SK-N-SH (cell line): ENCODE measurements at regions of chr16 and their contacts with region 1.

Region 1: GRCh38 chr16:57519796-57520360 is 16.5 kb downstream of the CCDC102A start:
- DNase-seq: peak; percentile 94
- H3K4me3 ChIP-seq: no peak overlapping the region
- H3K27ac ChIP-seq: 0 out of 4 replicates have a peak overlapping the region, but pooled peaks of 1 of the 2 experiments have one; percentile 16
- H3K4me1 ChIP-seq: peaks cover 0 to 16% of the 10 kb centered on the region in 2 experiments; a peak in 1 of 4 replicates
- H3K27me3 ChIP-seq: no peaks in the 10 kb centered on the region
- CTCF ChIP-seq: peak; percentile 98
- EP300 ChIP-seq: no peak
- RAD21 ChIP-seq: peak; percentile 96

Region 2: GRCh38 chr16:57422026-57422944 is 97.6 kb before region 1 on chr16:
- CTCF ChIA-PET with region 1: interaction called, 426 read pairs
- POLR2A ChIA-PET with region 1: interaction called, 8 read pairs
- DNase-seq: peak; percentile 72
- H3K4me3 ChIP-seq: no peak overlapping the region
- H3K27ac ChIP-seq: peak overlapping the region; percentile 17 to 45; a peak in 3 of 4 replicates
- H3K4me1 ChIP-seq: peaks cover 0 to 17% of the 10 kb centered on the region in 2 experiments; a peak in 2 of 4 replicates
- H3K27me3 ChIP-seq: no peaks in the 10 kb centered on the region
- CTCF ChIP-seq: peak; percentile 77
- EP300 ChIP-seq: no peak
- RAD21 ChIP-seq: peak; percentile 86

Region 3: DNA sequence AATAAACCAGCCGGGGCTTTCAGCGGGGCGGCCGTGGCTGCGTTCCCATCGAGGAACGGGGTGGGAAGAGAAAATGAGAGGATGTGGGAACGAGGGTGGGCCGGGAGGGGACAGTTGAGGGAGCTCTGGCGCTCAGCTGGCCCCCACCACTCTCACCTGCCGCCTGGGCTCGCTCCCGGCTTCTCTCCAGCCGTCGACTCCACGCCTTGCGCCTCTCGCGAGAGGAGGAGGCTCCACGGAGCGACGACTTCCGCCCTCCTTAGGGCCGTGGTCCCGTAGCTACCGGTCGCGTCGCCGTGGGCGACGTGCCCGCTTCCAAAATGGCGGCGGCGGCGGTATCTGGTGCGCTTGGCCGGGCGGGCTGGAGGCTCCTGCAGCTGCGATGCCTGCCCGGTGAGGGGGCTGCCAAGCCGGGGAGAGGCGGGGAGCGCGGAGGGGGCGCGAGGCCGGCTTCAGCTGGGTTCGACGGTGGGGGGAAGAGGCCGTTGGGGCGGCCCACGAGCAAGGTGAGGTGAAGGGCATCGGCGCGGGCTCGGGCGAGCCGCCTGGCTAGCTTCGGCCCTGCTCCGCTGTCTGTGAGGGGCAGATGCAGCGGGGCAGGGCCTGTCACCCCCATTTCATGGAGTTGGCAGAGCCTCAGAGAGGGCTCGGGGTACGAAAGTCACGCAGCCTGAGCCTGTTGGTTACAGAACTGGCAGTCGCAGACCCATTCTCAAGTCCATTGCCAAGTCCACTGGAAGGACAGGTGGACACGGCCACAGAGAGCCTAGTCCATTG is 72.5 kb before region 1 on chr16 and contains the starts of genes CIAPIN1 and COQ9:
- CTCF ChIA-PET with region 1: interaction called, 53 read pairs
- POLR2A ChIA-PET with region 1: interaction called, 8 read pairs
- DNase-seq: peak; percentile 96
- H3K4me3 ChIP-seq: peak within 1 kb of the TSS; percentile 90 to 96
- H3K27ac ChIP-seq: peak within 1 kb of the TSS; percentile 65 to 84; a peak in 3 of 4 replicates
- H3K4me1 ChIP-seq: peaks cover 3 to 9% of the 10 kb centered on the region in 2 experiments; a peak in 2 of 4 replicates
- H3K27me3 ChIP-seq: no peaks in the 10 kb centered on the region
- CTCF ChIP-seq: no peak
- EP300 ChIP-seq: no peak
- RAD21 ChIP-seq: no peak
- polyA plus RNA-seq, gene CIAPIN1: 43.6 and 63.3 TPM in 2 replicates
- polyA plus RNA-seq, gene COQ9: 81.2 and 104 TPM in 2 replicates

Region 4: DNA sequence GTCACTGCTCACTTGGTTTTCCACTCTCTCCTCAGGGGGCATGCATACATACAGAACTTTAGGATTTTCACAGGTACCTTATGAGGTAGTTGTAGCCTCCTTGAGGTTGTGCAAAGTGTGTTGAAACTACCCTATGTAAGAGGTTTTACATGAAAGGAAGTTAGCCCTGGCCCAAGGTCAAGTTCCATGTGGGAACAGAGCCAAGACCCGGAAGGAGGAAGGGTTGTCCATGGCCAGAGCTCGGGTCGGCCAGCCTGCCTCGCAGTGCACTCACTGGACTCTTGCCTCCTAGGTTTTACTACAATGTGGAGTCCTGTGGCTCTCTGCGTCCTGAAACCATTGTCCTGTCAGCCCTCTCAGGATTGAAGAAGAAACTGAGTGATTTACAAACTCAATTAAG is 49.2 kb before region 1 on chr16:
- CTCF ChIA-PET with region 1: interaction called, 354 read pairs
- POLR2A ChIA-PET with region 1: interaction called, 12 read pairs
- DNase-seq: peak; percentile 45
- H3K4me3 ChIP-seq: no peak overlapping the region
- H3K27ac ChIP-seq: peak overlapping the region in 1 of 2 experiments; percentile 95; a peak in 2 of 4 replicates
- H3K4me1 ChIP-seq: peaks cover 0 to 60% of the 10 kb centered on the region in 2 experiments; a peak in 2 of 4 replicates
- H3K27me3 ChIP-seq: no peaks in the 10 kb centered on the region
- CTCF ChIP-seq: no peak
- EP300 ChIP-seq: no peak
- RAD21 ChIP-seq: no peak

Region 5: DNA sequence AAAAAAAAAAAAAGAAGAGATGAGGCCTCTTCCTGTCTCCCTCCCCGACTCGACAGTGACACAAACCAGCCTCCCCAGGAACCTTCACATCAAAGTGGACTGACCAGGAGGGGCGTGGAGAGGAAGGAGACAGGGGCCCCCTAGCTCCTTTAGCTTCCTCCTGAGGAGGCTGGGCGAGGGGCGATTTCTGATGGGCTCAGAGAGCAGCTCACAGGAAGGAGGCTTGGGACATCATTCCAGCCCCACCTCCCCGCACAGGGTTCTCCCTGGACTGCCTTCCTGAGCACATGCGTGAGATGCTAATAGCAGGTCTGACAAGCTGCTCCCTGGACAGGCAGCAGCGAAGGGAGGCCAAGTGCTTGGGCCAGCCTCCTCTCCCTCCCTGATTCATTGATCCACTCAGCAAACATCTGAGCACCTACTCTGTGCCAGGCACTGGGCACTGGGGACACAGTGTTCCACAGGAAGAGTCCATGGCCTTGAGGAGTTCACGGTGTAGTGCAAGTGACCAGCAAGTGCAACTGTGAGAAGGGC is 19.2 kb before region 1 on chr16:
- CTCF ChIA-PET with region 1: interaction called, 12 read pairs
- POLR2A ChIA-PET with region 1: no interaction called
- DNase-seq: peak; percentile 69
- H3K4me3 ChIP-seq: no peak overlapping the region
- H3K27ac ChIP-seq: peak overlapping the region in 1 of 2 experiments; percentile 72; a peak in 2 of 4 replicates
- H3K4me1 ChIP-seq: peaks cover 0 to 25% of the 10 kb centered on the region in 2 experiments; a peak in 1 of 4 replicates
- H3K27me3 ChIP-seq: no peaks in the 10 kb centered on the region
- CTCF ChIP-seq: no peak
- EP300 ChIP-seq: no peak
- RAD21 ChIP-seq: no peak

Region 6: DNA sequence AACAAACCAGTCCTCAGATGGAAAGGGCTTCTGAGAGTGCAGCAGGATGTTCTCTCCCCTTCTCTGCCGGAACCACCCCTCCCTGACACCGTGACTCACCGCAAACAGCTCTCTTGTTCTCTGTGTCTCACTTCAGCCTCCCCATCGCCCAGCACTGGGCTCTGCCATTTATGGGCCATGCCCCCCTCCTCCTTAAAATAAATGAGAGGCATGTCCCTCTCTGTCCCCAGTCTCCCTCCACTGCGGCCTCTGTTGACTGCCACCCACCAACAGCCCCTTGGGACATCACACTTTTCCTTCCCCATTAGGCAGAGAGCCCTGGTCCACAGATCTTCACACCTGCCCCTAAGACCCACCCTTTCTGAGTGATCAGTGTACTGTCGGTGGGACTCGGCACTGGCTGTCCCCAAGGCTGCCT is 10.2 kb after region 1 on chr16:
- CTCF ChIA-PET with region 1: interaction called, 27 read pairs
- POLR2A ChIA-PET with region 1: no interaction called
- DNase-seq: peak; percentile 30
- H3K4me3 ChIP-seq: no peak overlapping the region
- H3K27ac ChIP-seq: peak overlapping the region in 1 of 2 experiments; percentile 51; a peak in 1 of 4 replicates
- H3K4me1 ChIP-seq: peaks cover 30 to 33% of the 10 kb centered on the region in 2 experiments; a peak in 3 of 4 replicates
- H3K27me3 ChIP-seq: no peaks in the 10 kb centered on the region
- CTCF ChIP-seq: no peak
- EP300 ChIP-seq: no peak
- RAD21 ChIP-seq: no peak